Sciatic nerve (tissue), 2 donors: ENCODE measurements at regions of chr17 and their contacts with region 1.

Region 1: DNA sequence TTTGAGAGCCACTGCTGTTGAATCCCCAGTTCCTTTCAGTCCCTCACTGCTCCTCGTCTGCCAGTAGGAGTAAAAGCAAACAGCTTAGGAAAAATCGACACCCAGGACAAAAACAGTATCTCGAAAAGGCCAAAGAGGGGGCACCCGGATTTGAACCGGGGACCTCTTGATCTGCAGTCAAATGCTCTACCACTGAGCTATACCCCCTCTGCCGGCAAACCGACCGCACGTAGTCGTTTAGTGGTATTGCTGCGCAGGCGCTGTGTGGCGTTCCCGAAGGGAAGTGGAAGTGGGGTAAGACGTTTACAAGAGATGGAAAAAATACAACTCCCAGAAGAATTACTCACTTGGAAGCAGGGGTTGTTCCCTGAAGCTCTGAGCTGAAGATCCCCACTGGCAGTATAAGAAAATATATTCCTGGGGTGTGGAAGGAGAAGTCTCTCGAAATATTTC is 2.2 kb upstream of the PLXDC1 start:
- DNase-seq: peak; percentile 98
- ATAC-seq: peak; percentile 93

Region 2: DNA sequence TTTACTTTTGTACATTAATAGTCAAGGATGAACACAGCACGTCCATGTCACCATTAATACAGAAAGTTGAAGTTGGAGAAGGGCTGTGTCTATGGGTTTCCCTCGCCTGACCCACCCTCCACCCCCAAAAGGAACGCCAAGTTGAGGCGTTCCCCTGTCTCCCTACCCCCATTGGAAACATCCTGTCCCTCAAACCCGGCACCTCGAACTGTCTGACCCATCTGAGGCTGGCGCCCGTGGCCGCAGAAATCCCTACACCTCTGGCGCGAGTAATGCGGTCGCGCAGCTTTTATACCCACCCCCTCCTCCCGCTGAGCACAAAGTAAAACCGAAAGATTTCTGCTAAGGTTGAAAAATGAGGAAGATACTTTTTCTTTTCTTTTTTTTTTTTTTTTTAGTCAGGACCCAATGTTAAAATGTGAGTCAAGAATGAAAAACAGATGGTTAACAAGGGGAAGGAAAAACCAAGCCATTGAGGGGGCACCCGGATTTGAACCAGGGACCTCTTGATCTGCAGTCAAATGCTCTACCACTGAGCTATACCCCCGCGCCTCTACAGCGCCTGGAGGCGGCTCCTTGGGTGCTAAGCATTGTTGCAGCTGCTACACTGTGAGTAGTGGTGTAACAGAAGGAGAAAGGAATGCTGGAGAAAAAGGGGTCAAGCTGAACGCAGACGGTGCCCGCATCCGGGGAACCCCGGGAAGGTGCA is 284.7 kb before region 1 on chr17:
- intact Hi-C with region 1: loop called (anchors 10 kb)
- DNase-seq: peak; percentile 96
- ATAC-seq: peak; percentile 85

Region 3: GRCh38 chr17:38982858-38983746 is 170.5 kb before region 1 on chr17:
- intact Hi-C with region 1: loop called (anchors 5 kb)
- DNase-seq: no peak
- ATAC-seq: peak; percentile 89

Region 4: DNA sequence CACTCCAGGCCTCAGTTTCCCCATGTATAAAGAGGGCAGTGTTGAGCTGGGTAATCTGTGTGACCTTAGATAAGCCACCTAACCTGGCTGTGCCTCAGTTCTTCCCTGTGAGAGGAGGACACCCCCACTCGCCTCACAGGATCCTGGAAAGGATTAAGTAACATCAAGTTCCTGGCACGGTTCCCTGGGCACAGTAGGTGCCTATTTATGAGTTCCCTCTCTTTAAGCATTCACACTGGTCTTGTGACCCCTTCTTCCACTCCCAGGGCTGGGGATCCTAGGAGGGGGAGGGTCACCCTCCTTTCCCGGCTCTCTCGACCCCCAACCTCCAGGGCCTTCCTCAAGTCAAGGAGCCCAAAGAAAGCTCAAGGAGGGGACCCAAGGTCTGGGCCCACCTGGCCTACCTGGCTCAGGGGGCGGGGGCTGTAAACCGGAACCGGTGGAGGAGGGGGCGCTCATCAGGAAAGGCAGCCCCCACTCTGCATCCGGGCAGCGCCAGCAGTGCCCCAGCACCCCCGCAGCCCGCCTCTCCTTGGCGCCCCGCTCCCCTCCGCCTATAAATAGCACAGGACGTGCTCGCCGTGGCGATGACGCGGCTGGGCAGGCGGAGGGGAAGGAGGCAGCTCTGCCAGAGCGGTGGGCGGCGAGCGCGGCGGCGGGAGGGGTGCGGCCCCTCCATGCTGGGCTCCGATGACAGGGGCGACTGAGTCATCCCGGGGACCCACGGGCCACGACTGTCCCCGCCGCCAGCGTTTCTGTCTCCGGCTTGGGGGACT is 55.9 kb after region 1 on chr17:
- intact Hi-C with region 1: no loop called
- DNase-seq: peak; percentile 74
- ATAC-seq: peak; percentile 74

Region 5: DNA sequence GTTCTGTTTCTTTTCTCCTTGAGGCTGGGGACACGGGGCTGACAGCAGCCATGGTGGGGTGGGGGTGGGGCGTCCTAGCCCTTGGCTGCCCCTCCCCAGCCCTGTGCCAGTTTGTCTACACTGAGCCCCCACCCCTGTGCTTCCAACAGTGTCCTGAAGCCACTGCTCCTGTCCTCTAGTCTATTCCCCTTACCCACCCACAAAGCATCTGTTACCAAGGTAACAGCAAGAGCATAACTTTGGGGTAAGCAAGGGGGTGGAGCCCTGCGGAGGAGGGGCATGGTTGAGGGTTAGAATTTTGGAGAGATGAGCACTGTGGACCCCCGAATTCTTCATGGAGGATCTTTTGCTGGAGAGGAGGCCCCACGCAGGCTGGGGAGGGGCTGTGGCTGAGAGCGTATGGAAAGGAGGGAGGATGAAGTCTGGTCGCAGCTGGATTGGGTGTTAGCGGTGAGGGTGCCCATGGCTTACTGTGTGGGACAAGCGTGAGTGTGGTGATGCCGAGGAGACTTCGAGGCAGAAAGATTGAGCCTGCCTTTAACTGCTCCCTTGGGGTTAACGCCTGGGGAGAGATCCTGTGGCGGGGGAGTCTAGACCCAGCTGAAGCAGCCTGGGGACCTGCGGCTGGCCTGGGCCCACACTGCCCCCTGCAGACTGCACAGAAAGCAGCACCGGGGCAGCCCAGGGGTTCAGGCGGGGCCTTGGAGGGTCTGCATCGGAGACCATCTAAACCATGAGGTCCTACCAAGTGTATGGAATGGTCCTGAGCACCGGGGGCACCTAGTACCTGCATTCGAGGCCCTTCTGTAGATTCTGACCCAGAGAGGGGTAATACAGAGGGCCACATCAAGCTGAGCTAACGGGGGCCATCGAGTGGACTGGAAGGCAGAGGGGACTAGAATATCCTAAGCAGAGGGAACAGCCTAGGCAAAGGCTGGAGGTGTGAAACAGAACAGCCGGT is 78.2 kb after region 1 on chr17:
- intact Hi-C with region 1: no loop called
- DNase-seq: no peak
- ATAC-seq: peak; percentile 82